ENCODE measurements at regions of chr19 and their contacts with region 1.

Region 1: DNA sequence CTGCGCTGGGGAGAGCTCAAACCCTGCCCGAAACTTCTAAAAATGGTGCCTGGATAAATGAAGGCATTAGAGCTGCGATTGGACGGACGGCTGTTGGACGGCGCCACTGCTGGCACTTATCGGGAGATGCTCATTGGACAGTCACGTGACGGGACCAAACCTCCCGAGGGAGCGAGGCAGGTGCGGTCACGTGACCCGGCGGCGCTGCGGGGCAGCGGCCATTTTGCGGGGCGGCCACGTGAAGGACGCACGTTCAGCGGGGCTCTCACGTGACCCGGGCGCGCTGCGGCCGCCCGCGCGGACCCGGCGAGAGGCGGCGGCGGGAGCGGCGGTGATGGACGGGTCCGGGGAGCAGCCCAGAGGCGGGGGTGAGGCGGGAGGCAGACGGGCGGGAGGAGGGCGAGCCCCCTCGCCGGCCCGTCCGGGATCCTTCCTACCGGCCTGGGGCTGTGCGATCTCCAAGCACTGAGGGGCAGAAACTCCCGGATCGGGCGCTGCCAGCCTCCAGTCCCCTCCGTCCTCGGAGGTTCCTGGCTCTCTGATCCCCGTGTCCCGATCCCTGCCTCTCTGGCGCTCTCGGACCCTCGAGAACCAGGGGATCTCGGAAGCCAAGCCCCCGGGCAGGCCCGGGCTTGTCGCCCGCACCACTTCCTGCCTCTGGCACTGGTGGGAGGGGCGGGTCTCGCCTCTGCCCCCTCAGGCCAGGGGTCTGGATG is at the start of gene BAX:
- DNase-seq: peak; percentile 96
- ATAC-seq: peak; percentile 81
- H3K4me3 ChIP-seq: peak within 1 kb of the TSS; percentile 76 to 84 (median 81)
- H3K27ac ChIP-seq: peak within 1 kb of the TSS; percentile 82
- H3K4me1 ChIP-seq: peaks cover 85% of the 10 kb centered on the region
- H3K27me3 ChIP-seq: no peaks in the 10 kb centered on the region
- CTCF ChIP-seq: peak; percentile 47
- EP300 ChIP-seq: peak in 1 of 2 experiments; percentile 25; a peak in 1 of 4 replicates
- POLR2A ChIP-seq: peak in 1 of 2 experiments; percentile 69; a peak in 3 of 4 replicates
- RAD21 ChIP-seq: peak; percentile 71
- total RNA-seq, gene BAX: 167 and 176 TPM in 2 replicates

Region 2: DNA sequence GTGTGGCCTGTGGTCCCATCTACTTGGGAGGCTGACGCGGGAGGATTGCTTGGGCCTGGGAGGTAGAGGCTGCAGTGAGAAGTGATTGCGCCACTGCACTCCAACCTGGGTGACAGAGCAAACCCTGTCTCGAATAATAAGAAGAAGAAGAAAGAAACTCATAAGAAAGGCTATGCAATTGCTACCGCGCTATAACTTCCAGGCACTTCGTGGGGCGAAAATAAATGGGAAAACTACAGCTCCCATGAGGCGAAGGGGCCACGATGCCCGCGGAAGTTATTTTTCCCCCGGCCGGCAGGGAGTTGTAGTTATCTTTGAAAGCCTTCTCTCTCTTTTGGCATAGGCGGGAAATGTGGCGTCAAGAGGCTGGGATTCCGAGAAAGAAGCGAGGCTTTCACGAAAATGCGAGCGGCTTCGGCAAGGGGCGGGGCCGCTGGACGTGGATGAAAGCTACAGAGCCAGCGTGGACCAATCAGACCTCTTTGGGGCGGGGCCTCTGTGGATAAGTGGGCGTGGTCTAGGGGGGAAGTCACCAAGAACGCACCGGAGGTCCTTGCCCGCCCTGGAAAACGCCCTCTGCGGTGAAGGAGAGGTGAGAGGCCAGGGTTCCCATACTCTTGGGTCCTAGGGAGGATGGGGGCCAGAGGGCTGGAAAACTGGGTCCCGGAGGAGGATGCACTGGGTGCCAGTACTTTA is 54.8 kb before region 1 on chr19 and contains the start of gene NUCB1:
- CTCF ChIA-PET with region 1: no interaction called
- POLR2A ChIA-PET with region 1: interaction called, 12 read pairs
- in situ Hi-C with region 1: no loop called
- intact Hi-C with region 1: no loop called
- DNase-seq: peak; percentile 97
- ATAC-seq: peak; percentile 91
- H3K4me3 ChIP-seq: peak within 1 kb of the TSS; percentile 73 to 97 (median 96)
- H3K27ac ChIP-seq: peak within 1 kb of the TSS; percentile 77
- H3K4me1 ChIP-seq: peaks cover 44% of the 10 kb centered on the region
- H3K27me3 ChIP-seq: no peaks in the 10 kb centered on the region; a peak in 1 of 5 replicates
- CTCF ChIP-seq: peak; percentile 41
- EP300 ChIP-seq: no peak
- POLR2A ChIP-seq: peak; percentile 23 to 77; a peak in 2 of 4 replicates
- RAD21 ChIP-seq: no peak
- total RNA-seq, gene NUCB1: 34.3 and 82.3 TPM in 2 replicates

Region 3: GRCh38 chr19:48933382-48933932 is 21.3 kb before region 1 on chr19 and contains the start of gene DHDH:
- CTCF ChIA-PET with region 1: no interaction called
- POLR2A ChIA-PET with region 1: interaction called, 20 read pairs
- in situ Hi-C with region 1: no loop called
- intact Hi-C with region 1: no loop called
- DNase-seq: peak; percentile 74
- ATAC-seq: peak; percentile 90
- H3K4me3 ChIP-seq: peak within 1 kb of the TSS; percentile 36 to 71 (median 51)
- H3K27ac ChIP-seq: no peak within 1 kb of the TSS
- H3K4me1 ChIP-seq: peaks cover 31% of the 10 kb centered on the region
- H3K27me3 ChIP-seq: peaks cover 0 to 1% of the 10 kb centered on the region in 2 experiments; a peak in 1 of 5 replicates
- CTCF ChIP-seq: no peak
- EP300 ChIP-seq: no peak
- POLR2A ChIP-seq: peak in 1 of 2 experiments; percentile 72; a peak in 2 of 4 replicates
- RAD21 ChIP-seq: no peak
- total RNA-seq, gene DHDH: 0.13 and 0.29 TPM in 2 replicates